ENCODE measurements at regions of chr1 and their contacts with region 1.

Region 1: GRCh38 chr1:245045087-245045881 is 109.5 kb upstream of the KIF26B start:
- DNase-seq: no peak
- ATAC-seq: no peak
- H3K4me3 ChIP-seq: no peak overlapping the region
- H3K4me3 Mint-ChIP-seq: no peak overlapping the region
- H3K27ac ChIP-seq: no peak overlapping the region
- H3K27ac Mint-ChIP-seq: no peak overlapping the region
- H3K4me1 ChIP-seq: no peaks in the 10 kb centered on the region
- H3K4me1 Mint-ChIP-seq: peaks cover 0 to 6% (median 0%) of the 10 kb centered on the region in 7 donors
- H3K27me3 ChIP-seq: no peaks in the 10 kb centered on the region
- H3K27me3 Mint-ChIP-seq: peaks cover 0 to 2% (median 0%) of the 10 kb centered on the region in 5 donors

Region 2: DNA sequence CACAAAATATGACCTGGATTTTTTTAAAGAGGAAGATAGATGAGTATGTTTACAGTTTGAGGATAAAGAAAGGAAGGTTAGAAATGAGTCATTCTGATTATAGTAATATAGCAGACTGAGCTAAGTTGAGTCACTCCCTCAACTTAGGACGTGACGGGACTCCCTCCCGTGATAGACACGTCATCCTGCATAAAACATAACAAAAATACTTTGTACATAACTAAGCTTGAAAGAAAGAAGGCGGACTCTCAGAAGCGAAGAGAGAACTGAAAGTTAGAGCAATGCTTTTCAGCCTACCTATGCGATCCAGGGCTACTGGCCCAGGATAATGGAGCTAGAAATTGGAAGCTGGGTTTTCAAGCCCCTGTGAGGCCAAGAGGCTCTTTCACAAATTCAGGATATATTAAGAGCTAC is 445.3 kb before region 1 on chr1:
- CTCF ChIA-PET with region 1: interaction called, 44 read pairs
- POLR2A ChIA-PET with region 1: interaction called, 4 read pairs
- intact Hi-C with region 1: loop called (anchors 1 kb)
- DNase-seq: peak in 5 of 9 donors; percentile 7 to 47 (median 14)
- ATAC-seq: peak; percentile 86
- H3K4me3 ChIP-seq: no peak overlapping the region
- H3K4me3 Mint-ChIP-seq: peak overlapping the region in 3 of 10 donors; percentile 30 to 67 (median 64)
- H3K27ac ChIP-seq: no peak overlapping the region
- H3K27ac Mint-ChIP-seq: peak overlapping the region in 5 of 9 donors; percentile 57 to 90 (median 89)
- H3K4me1 ChIP-seq: no peaks in the 10 kb centered on the region
- H3K4me1 Mint-ChIP-seq: peaks cover 0 to 16% (median 0%) of the 10 kb centered on the region in 7 donors
- H3K27me3 ChIP-seq: no peaks in the 10 kb centered on the region
- H3K27me3 Mint-ChIP-seq: peaks cover 0 to 7% (median 0%) of the 10 kb centered on the region in 5 donors

Region 3: DNA sequence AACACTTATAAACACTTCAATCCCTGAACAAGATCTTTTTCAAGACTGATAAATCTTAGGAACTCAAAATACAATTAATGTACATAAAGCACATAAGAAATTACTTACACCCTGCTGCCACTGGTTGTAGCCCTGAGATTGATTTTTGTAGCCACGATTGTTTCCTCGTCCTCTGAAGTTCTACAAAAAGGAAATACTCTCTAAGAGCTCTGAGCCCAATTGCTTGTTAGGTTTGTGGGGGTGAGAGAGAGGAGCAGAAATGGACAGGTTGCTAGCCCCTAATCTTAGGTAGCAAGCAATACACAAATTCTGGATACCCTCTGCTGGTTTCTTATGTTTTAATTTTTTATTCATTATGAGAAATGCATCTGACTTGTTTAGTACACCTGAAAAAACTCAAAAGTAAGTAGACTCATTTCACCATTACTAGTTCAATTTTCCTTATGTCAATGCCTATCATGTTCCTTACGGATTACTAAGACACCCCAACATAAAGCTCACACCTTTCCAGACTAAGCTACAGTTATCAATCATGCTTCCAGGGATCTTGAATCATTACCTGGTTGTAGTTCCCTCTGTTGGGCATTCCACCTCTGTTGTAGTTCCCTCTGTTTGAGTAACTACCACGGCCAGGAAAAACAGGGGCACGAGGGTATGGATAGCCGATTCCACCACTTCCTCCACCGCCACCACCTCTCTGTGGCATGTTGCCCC is 190.3 kb before region 1 on chr1:
- CTCF ChIA-PET with region 1: no interaction called
- POLR2A ChIA-PET with region 1: interaction called, 4 read pairs
- intact Hi-C with region 1: loop called in 1 of 2 experiments (anchors 1 kb)
- DNase-seq: peak in 1 of 9 donors; percentile 17
- ATAC-seq: peak; percentile 24
- H3K4me3 ChIP-seq: no peak overlapping the region
- H3K4me3 Mint-ChIP-seq: peak overlapping the region; percentile 65 to 82 (median 76)
- H3K27ac ChIP-seq: peak overlapping the region; percentile 42
- H3K27ac Mint-ChIP-seq: peak overlapping the region; percentile 44 to 99 (median 87)
- H3K4me1 ChIP-seq: peaks cover 67 to 71% of the 10 kb centered on the region in 2 donors
- H3K4me1 Mint-ChIP-seq: peaks cover 54 to 100% (median 96%) of the 10 kb centered on the region in 7 donors
- H3K27me3 ChIP-seq: no peaks in the 10 kb centered on the region
- H3K27me3 Mint-ChIP-seq: no peaks in the 10 kb centered on the region

Region 4: DNA sequence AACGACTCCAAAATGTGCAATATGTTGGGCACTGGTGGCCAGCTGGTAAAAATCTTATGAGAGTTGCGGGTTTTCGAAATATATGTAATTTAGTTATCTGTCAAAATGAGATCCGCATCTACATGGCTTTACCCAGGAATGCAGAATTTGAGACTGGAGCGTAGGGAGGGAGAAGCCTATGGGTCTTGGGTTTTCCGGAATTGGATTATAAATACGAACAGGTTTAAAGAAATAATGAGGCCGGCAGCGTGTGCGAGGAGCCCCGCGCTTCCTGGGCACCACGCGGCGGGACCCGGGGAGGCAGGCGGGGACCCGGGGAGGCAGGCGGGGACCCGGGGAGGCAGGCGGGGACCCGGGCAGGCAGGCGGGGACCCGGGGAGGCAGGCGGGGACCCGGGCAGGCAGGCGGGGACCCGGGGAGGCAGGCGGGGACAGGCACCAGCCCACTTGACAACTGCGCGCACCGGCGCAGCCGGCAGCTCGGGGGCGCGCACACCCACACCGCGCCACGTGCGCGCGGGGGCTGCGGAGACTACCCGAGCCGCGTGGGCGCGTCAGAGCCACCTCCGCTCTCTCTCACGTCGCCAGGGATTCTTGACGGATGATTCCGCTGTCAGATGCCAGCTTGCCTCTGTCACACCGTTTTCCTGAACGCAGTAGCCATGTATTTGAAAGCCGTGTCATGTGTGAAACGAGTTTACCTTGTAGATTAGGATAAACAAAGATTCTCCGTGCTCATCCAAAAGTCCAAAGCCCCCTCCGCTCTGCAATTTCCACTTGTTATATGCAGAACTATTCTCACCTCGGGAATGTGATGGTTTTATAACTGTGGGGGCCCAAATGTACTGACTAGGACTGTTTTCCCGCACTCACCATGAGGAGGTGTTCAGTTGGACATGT is 126.6 kb before region 1 on chr1:
- CTCF ChIA-PET with region 1: no interaction called
- POLR2A ChIA-PET with region 1: no interaction called
- intact Hi-C with region 1: loop called in 1 of 2 experiments (anchors 1 kb)
- DNase-seq: peak; percentile 66 to 85 (median 79)
- ATAC-seq: peak; percentile 98
- H3K4me3 ChIP-seq: peak overlapping the region; percentile 62
- H3K4me3 Mint-ChIP-seq: peak overlapping the region; percentile 88 to 96 (median 92)
- H3K27ac ChIP-seq: peak overlapping the region; percentile 56
- H3K27ac Mint-ChIP-seq: peak overlapping the region in 8 of 9 donors; percentile 73 to 96 (median 90)
- H3K4me1 ChIP-seq: peaks cover 6 to 7% of the 10 kb centered on the region in 2 donors
- H3K4me1 Mint-ChIP-seq: peaks cover 0 to 15% (median 10%) of the 10 kb centered on the region in 7 donors
- H3K27me3 ChIP-seq: no peaks in the 10 kb centered on the region
- H3K27me3 Mint-ChIP-seq: peaks cover 0 to 33% (median 0%) of the 10 kb centered on the region in 5 donors

Measured in naive thymus-derived CD4-positive, alpha-beta T cell (primary cell).